Gastrocnemius medialis (tissue), 4 donors: ENCODE measurements at regions of chr1 and their contacts with region 1.

Region 1: DNA sequence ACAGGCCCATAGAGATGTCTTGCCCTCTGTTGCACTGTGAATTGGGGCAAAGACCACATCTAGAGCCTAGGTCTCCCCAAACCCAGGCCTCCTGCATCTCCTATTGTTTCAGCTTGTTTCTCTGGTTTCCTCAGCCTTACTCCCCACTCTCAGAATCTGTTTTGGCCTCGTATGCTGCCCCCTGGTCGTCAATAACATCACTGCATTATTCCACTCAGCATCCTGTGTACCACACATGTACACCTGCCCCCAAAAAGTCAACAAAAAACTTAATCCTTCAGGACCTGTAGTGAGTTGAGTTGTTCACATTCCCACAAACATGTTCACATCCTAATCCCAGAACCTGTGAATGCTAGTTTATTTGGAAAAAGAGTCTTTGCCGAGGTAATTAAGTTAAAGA is 184.8 kb downstream of the BRINP2 start:
- DNase-seq: no peak
- ATAC-seq: no peak
- H3K4me3 ChIP-seq: no peak overlapping the region
- H3K27ac ChIP-seq: no peak overlapping the region
- H3K4me1 ChIP-seq: no peaks in the 10 kb centered on the region
- H3K27me3 ChIP-seq: peaks cover 0 to 2% (median 0%) of the 10 kb centered on the region in 3 donors
- CTCF ChIP-seq: peak in 2 of 5 experiments; percentile 16 to 28
- POLR2A ChIP-seq: no peak

Region 2: GRCh38 chr1:177256153-177257075 is 99.2 kb before region 1 on chr1:
- in situ Hi-C with region 1: no loop called
- intact Hi-C with region 1: loop called (anchors 2 kb)
- DNase-seq: peak; percentile 20 to 58
- ATAC-seq: peak; percentile 82 to 92
- H3K4me3 ChIP-seq: no peak overlapping the region
- H3K27ac ChIP-seq: peak overlapping the region in 1 of 4 donors; percentile 35
- H3K4me1 ChIP-seq: peaks cover 5 to 7% of the 10 kb centered on the region in 2 donors
- H3K27me3 ChIP-seq: no peaks in the 10 kb centered on the region
- CTCF ChIP-seq: peak; percentile 64 to 78 (median 77)
- POLR2A ChIP-seq: no peak